Activated CD8-positive, alpha-beta T cell treated with anti-CD3 and anti-CD28 coated beads for 36 hours (primary cell): ENCODE measurements at regions of chr22 and their contacts with region 1.

Region 1: DNA sequence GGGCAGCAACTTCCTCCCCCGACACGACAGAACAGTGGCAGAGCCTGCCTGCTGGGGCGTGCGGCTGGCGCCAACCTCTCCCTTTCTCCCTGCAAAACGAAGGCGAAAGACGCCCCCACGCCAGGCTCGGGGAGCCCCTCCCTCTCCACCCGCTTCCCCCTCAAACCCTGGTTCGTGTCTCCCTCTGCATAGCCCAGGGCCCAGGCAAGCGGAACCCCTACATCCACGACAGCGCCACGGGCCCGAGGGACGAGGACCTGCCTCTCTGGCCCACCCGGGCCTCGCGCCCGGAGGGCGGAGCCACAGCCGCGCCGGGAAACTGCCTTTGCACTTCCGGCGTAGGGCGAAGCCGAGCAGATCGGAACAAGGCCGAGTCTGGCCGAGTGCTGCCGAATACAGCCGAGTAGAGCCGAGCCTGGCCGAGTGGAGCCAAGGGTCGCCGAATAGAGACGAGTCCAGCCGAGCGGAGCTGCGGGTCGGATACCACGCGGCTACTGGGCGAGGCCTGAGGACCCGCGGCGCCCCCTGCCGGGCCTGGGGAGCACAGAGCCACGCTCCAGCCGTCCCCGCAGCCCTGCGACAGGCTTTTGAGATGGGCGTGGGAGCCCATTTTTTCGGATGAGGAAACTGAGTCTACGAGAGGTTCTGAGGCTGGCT is 11.2 kb upstream of the C1QTNF6 start:
- DNase-seq: peak; percentile 100
- ATAC-seq: peak; percentile 96
- H3K4me3 Mint-ChIP-seq: peak overlapping the region; percentile 86
- H3K27ac Mint-ChIP-seq: peak overlapping the region; percentile 98
- H3K4me1 Mint-ChIP-seq: peaks cover 70% of the 10 kb centered on the region
- H3K27me3 Mint-ChIP-seq: no peaks in the 10 kb centered on the region
- CTCF ChIP-seq: peak; percentile 85

Region 2: DNA sequence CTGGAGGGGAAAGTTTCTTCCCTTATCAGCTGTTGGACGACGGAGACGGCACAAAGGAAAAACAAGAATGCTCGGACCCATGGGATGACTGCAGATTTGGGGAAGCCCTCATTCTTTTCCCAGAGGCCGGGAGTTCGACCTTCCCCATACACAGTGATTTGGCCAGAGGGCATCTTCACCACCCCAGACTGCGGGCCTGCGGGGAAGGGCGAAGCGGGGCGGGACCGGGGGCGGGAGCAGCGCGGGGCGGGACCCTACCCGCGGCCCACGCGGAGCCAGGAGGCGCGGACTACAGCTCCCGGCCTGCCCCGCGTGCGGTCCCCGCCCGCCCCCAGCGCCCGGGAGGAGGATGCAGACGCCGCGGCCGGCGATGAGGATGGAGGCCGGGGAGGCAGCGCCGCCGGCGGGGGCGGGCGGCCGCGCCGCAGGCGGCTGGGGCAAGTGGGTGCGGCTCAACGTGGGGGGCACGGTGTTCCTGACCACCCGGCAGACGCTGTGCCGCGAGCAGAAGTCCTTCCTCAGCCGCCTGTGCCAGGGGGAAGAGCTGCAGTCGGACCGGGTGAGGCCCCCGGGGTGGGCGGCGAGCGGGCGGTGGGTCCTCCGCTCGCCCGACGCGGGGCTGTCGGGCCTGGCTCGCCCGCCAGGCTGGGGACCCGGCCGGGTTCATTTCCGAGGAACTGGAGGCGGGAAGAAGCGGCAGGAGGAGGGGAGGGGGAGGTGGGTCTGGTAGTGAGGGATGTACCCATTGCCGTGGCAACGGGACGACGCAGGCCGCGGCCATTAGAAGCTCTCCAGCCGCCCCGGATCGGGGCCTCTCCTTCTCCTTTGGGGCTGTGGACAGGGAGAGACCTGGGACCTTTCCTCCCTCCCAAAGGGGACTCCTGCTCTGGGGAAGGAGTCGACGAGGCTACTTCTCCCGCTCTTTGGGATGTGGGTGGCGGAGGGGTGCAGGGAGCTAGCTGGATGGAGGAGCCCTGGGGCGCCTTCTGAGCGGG is 147.5 kb before region 1 on chr22 and contains the start of gene KCTD17:
- CTCF ChIA-PET with region 1: interaction called, 18 read pairs
- POLR2A ChIA-PET with region 1: interaction called, 3 read pairs
- intact Hi-C with region 1: no loop called
- DNase-seq: peak; percentile 84
- ATAC-seq: peak; percentile 99
- H3K4me3 Mint-ChIP-seq: peak within 1 kb of the TSS; percentile 79
- H3K27ac Mint-ChIP-seq: peak within 1 kb of the TSS; percentile 38
- H3K4me1 Mint-ChIP-seq: peaks cover 14% of the 10 kb centered on the region
- H3K27me3 Mint-ChIP-seq: no peaks in the 10 kb centered on the region
- CTCF ChIP-seq: no peak
- total RNA-seq, gene KCTD17: 30.3 to 30.6 TPM

Region 3: GRCh38 chr22:37148742-37149665 is 50.2 kb before region 1 on chr22:
- CTCF ChIA-PET with region 1: interaction called, 49 read pairs
- POLR2A ChIA-PET with region 1: interaction called, 8 read pairs
- intact Hi-C with region 1: loop called (anchors 10 kb)
- DNase-seq: no peak
- ATAC-seq: no peak
- H3K4me3 Mint-ChIP-seq: peak overlapping the region; percentile 87
- H3K27ac Mint-ChIP-seq: peak overlapping the region; percentile 93
- H3K4me1 Mint-ChIP-seq: peaks cover 60% of the 10 kb centered on the region
- H3K27me3 Mint-ChIP-seq: no peaks in the 10 kb centered on the region
- CTCF ChIP-seq: no peak

Region 4: GRCh38 chr22:37210041-37210803 is 11.0 kb after region 1 on chr22:
- CTCF ChIA-PET with region 1: interaction called, 45 read pairs
- POLR2A ChIA-PET with region 1: interaction called, 9 read pairs
- intact Hi-C with region 1: no loop called
- DNase-seq: peak; percentile 2
- ATAC-seq: no peak
- H3K4me3 Mint-ChIP-seq: no peak overlapping the region
- H3K27ac Mint-ChIP-seq: no peak overlapping the region
- H3K4me1 Mint-ChIP-seq: peaks cover 48% of the 10 kb centered on the region
- H3K27me3 Mint-ChIP-seq: no peaks in the 10 kb centered on the region
- CTCF ChIP-seq: no peak

Region 5: DNA sequence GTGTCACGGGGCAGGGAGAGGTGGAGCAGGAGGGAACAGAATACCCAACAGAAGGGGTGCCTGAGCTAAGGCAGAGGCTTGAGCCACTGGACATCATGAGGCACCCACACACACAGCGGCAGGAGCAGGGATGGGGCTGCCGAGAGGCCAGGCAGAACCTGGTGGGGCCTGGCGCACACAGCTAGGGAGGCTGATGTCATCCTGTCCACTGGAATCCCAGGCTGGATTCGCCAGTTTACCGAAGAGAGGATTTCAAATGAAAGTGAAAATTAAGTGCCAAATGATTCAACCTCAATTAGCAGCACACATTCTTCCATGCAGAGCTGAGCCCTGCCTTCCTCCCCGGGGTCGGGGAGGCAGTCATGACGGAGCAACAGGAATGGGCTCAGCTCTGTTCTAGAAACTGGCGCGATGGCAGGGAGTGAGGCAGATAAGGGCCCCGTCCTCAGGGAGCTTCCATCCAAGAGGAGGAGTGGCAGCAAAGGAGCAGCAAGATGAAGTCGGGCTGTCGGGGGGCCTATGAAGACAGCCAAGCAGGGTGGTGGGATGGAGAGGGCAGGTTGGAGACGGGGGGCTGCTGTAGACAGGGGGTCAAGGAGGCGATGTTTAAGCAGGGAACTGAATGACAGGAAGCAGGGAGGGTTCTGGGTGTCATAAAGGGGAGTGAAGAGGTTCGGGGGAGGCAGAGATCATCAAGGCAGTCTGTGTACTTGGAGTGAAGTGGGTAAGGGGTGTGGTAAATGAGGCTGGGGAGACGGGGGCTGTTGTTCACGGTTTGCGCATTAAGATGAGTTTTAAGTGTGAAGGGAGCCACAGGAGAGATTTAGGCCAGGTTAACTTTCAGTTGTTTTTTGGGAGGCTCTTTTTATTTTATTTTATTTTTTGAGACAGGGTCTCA is 38.4 kb after region 1 on chr22:
- CTCF ChIA-PET with region 1: interaction called, 15 read pairs
- POLR2A ChIA-PET with region 1: no interaction called
- intact Hi-C with region 1: no loop called
- DNase-seq: peak; percentile 22
- ATAC-seq: no peak
- H3K4me3 Mint-ChIP-seq: peak overlapping the region; percentile 98
- H3K27ac Mint-ChIP-seq: peak overlapping the region; percentile 97
- H3K4me1 Mint-ChIP-seq: peaks cover 84% of the 10 kb centered on the region
- H3K27me3 Mint-ChIP-seq: no peaks in the 10 kb centered on the region
- CTCF ChIP-seq: no peak